ENCODE measurements at regions of chr22 and their contacts with region 1.

Region 1: DNA sequence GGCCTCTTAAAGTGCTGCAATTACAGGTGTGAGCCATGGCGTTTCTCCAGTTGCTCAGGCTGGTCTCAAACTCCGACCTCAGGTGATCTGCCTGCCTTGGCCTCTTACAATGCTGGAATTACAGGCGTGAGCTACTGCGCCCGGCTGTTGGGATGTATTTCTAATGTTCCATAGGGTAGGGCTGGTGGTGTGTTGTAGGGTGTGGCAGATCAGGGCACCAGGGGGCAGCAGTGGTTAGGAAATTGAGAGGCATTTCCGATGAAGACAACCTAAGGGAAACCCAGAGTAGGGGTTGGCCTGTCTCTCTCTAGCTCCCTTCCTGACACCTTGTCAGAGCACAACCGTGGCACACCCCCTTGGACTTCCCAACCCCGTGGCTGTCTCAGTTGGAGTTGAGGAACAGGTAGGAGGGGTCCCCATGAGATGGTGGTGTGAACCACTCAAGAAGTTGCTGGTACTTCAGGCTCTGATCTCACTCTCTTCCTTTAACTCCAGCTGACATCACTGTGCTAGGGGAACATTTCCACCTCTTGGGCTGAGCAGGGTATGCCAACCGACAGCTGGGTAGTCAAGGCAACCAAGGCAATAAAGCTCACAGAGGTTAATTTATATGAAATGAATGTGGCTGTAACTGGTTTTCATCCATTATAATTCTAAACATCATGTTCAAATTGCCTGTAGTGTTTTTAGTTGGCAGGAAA is 33.0 kb downstream of the YWHAH start:
- DNase-seq: peak; percentile 91
- H3K4me3 Mint-ChIP-seq: no peak overlapping the region
- H3K27ac Mint-ChIP-seq: peak overlapping the region; percentile 3
- H3K4me1 Mint-ChIP-seq: peaks cover 32% of the 10 kb centered on the region
- H3K27me3 Mint-ChIP-seq: no peaks in the 10 kb centered on the region
- CTCF ChIP-seq: peak; percentile 89

Region 2: DNA sequence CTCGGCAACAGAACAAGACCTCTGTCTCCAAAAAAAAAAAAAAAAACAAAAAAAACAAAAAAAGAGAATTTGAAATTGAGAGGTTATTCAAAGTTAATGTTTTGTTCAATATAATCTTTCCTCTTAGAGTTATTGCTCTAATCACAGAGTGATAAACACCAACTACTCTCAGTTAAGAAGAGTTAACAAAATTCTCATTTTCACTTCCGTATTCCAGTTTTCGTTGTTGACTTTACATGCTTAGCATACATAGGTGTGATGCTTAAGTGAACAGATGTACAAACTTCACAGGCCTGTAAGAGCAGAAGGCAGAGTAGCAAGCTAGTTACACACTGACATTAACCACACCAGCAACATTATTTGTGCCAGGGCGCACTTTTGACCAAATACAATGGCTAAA is 500.0 kb before region 1 on chr22:
- CTCF ChIA-PET with region 1: no interaction called
- intact Hi-C with region 1: no loop called
- DNase-seq: no peak
- H3K4me3 Mint-ChIP-seq: no peak overlapping the region
- H3K27ac Mint-ChIP-seq: no peak overlapping the region
- H3K4me1 Mint-ChIP-seq: no peaks in the 10 kb centered on the region
- H3K27me3 Mint-ChIP-seq: no peaks in the 10 kb centered on the region
- CTCF ChIP-seq: no peak

Region 3: DNA sequence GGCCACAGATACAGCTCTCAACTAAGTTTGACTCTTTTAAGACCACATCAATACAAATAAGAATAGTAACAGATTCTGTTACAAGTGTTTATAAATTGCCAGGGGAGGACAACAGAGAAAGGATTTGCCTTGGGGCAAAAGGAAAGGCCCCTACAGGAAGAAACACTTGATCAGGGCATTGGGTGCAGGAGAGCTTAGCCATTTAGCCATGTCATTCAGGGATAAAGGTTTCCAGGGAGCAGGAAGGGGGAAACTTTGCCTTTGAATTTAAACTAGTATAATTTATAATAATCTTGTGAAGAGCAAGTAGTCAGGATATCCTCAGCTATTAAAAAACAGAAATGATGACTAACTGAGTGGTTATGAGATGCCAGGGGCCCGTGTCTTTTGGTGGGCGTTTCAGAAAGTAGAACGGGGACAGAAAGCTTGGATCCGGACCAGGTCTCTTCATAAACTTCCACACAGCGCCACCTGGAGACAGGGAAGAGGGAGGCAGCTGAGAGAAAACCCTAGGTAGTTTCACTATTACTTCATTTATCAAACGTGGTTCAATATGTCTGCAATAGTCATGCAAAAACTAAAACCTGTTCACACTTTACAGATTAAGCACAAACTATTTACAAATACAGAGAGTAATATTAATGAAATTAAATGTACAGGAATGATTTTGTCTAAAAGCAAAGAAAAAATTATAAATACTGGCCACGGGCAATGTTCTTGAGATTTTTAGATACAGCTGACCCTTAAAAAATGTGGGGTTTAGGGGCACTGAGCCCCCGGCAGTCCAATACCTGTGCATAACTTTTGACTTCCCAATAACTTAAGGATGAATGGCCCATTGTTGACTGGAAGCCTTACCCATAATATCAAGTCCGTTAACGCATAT is 288.8 kb after region 1 on chr22:
- CTCF ChIA-PET with region 1: interaction called, 4 read pairs
- intact Hi-C with region 1: loop called (anchors 1 kb)
- DNase-seq: peak; percentile 77
- H3K4me3 Mint-ChIP-seq: peak overlapping the region; percentile 14
- H3K27ac Mint-ChIP-seq: no peak overlapping the region
- H3K4me1 Mint-ChIP-seq: no peaks in the 10 kb centered on the region
- H3K27me3 Mint-ChIP-seq: peaks cover 12% of the 10 kb centered on the region
- CTCF ChIP-seq: peak; percentile 71